PC-3 (cell line): ENCODE measurements at regions of chr21 and their contacts with region 1.

Region 1: DNA sequence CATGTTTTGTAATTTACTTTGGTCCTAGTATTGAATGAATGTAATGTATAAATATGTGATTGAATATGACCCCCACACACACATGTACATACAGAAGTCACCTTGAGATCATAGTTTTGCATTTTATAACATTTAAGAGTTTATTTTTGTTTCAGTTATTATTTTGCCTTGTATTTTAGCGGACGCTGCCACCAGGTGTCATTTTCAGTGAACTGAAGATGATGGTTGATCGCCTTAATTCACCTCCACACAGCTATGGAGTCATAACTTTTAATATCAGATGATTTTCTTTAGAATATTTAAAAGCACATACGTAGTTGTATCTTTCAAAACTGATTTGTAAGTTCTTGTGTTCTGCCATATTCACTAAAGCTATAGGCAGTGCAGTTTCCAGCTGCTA is 130.4 kb downstream of the DYRK1A start:
- DNase-seq: peak; percentile 34
- ATAC-seq: peak; percentile 46; the same call in 1 of the 2 replicates
- H3K4me3 ChIP-seq: no peak overlapping the region
- H3K27ac ChIP-seq: no peak overlapping the region
- H3K4me1 ChIP-seq: no peaks in the 10 kb centered on the region
- H3K27me3 ChIP-seq: no peaks in the 10 kb centered on the region
- CTCF ChIP-seq: peak; percentile 68

Region 2: DNA sequence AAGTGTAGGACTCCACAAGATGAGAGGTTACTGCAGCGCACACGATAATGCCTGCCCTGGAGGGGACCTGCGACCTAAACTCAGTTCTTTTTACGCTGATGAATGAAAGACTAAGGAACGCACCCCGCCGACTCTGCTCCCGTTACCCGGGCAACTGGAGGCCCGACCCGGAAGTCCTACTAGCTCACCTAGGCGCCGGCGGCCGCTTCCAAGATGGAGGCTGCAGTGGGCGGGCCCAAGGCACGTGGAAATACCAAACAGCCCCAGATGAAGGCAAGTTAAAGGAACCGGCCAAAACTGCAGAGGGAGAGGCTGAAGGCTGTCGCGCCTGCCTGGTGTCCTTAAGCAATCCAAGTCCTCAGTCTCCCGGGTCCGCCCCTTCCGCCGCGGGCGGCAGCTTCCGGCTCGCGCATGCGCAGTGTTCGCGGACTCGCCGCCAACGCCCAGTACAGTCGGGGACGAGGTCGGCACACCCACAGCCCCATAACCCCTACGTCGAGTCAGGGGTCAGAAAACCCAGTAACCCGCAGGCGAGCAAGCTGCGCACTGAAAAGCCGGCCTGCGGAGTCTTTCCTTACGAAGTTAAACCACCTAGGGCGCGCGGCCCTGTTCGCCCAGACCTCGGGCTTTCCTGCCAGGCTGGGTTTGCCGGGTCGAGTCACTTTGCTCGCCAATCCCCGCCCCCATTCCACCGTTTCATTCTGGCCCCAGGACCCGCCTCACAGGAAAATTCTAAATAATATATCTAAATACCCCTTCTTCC is 1436.6 kb before region 1 on chr21 and contains the start of gene SETD4:
- CTCF ChIA-PET with region 1: no interaction called
- POLR2A ChIA-PET with region 1: interaction called, 11 read pairs
- intact Hi-C with region 1: no loop called
- DNase-seq: peak; percentile 89
- ATAC-seq: peak; percentile 89
- H3K4me3 ChIP-seq: peak within 1 kb of the TSS; percentile 87
- H3K27ac ChIP-seq: peak within 1 kb of the TSS; percentile 84
- H3K4me1 ChIP-seq: peaks cover 21% of the 10 kb centered on the region
- H3K27me3 ChIP-seq: no peaks in the 10 kb centered on the region
- CTCF ChIP-seq: no peak
- total RNA-seq, gene SETD4: 12.5 and 17.0 TPM in 2 replicates

Region 3: GRCh38 chr21:37582590-37582989 is 85.6 kb after region 1 on chr21:
- CTCF ChIA-PET with region 1: no interaction called
- POLR2A ChIA-PET with region 1: no interaction called
- intact Hi-C with region 1: loop called (anchors 2 kb)
- DNase-seq: peak; percentile 68
- ATAC-seq: peak; percentile 99
- H3K4me3 ChIP-seq: no peak overlapping the region
- H3K27ac ChIP-seq: no peak overlapping the region
- H3K4me1 ChIP-seq: no peaks in the 10 kb centered on the region
- H3K27me3 ChIP-seq: no peaks in the 10 kb centered on the region
- CTCF ChIP-seq: peak; percentile 91

Region 4: GRCh38 chr21:37642493-37642892 is 145.5 kb after region 1 on chr21:
- CTCF ChIA-PET with region 1: no interaction called
- POLR2A ChIA-PET with region 1: no interaction called
- intact Hi-C with region 1: loop called (anchors 10 kb)
- DNase-seq: peak; percentile 68
- ATAC-seq: peak; percentile 47
- H3K4me3 ChIP-seq: no peak overlapping the region
- H3K27ac ChIP-seq: no peak overlapping the region
- H3K4me1 ChIP-seq: peaks cover 13% of the 10 kb centered on the region
- H3K27me3 ChIP-seq: no peaks in the 10 kb centered on the region
- CTCF ChIP-seq: peak; percentile 66; the same call in 1 of the 2 replicates

Region 5: DNA sequence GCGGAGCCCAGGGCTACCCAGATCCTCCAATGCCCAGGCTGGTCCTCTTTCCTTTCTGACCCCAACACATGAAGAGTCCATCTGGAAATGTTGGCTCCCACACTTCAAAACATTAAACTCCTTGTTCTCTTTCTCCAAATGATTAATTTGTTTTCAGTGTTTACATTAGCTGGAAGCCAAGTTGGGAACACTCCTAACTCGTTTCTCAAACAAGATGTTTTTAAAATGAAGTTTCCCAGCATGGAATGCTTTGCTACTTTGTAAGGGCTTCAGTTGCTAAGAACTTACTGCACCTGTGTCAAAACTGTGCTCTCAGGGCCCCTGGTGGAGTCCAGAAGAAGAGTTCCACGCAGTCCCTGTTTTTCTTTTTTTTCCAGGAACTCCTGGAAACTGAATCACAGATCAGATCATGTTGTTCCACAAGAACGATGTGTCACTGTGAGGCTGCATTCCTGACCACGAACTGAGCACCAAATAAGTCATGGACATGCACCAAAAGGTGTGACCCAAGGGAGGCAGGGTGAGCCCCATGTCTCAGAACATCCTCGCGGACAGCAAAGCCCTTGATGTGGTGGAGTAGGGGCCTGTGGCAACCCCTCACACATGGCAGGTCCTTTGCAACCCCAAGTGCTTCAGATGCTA is 162.0 kb after region 1 on chr21:
- CTCF ChIA-PET with region 1: no interaction called
- POLR2A ChIA-PET with region 1: interaction called, 16 read pairs
- intact Hi-C with region 1: no loop called
- DNase-seq: peak; percentile 87
- ATAC-seq: peak; percentile 93
- H3K4me3 ChIP-seq: no peak overlapping the region
- H3K27ac ChIP-seq: no peak overlapping the region
- H3K4me1 ChIP-seq: peaks cover 17% of the 10 kb centered on the region
- H3K27me3 ChIP-seq: no peaks in the 10 kb centered on the region
- CTCF ChIP-seq: peak; percentile 51

Region 6: GRCh38 chr21:38400195-38400919 is 903.4 kb after region 1 on chr21:
- CTCF ChIA-PET with region 1: no interaction called
- POLR2A ChIA-PET with region 1: no interaction called
- intact Hi-C with region 1: no loop called
- DNase-seq: no peak
- ATAC-seq: no peak
- H3K4me3 ChIP-seq: no peak overlapping the region
- H3K27ac ChIP-seq: no peak overlapping the region
- H3K4me1 ChIP-seq: no peaks in the 10 kb centered on the region
- H3K27me3 ChIP-seq: peaks cover 76% of the 10 kb centered on the region
- CTCF ChIP-seq: no peak